Left ventricle myocardium inferior (tissue), 1 donor: ENCODE measurements at regions of chr1 and their contacts with region 1.

Region 1: DNA sequence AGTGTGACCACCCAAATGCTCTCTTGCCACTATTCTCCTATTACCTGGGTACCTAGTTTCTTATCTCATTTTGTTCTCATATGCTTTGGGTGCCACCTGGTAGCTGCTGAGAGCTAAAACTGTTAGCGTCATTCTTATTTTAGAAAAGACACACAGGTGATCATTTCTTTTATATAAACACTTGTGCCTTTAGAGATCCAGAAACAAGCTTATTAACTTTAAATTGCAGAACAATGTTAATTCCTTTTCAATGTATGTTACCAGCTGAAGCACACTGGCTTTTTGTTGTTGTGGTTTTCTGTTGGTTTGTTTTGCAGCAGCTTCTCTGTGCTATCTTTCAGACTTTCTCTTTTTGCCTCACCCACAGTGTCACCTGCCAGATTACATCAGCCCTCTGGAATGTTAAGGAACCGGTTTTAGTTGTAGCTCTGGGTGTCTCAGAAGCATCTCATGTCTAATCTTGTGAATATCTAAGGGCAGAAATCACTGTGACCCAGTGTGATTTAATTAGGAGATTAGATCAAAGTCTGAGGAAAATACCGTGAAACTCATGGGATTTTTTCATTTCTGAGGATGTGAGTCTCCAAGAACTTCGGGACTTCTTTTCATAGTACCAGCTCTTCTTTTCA is 43.4 kb upstream of the SLC19A2 start:
- DNase-seq: no peak
- H3K4me3 ChIP-seq: no peak overlapping the region
- H3K27ac ChIP-seq: no peak overlapping the region
- H3K4me1 ChIP-seq: peaks cover 5% of the 10 kb centered on the region
- H3K27me3 ChIP-seq: no peaks in the 10 kb centered on the region
- CTCF ChIP-seq: no peak

Region 2: GRCh38 chr1:169236143-169236542 is 293.0 kb before region 1 on chr1:
- intact Hi-C with region 1: no loop called
- DNase-seq: no peak
- H3K4me3 ChIP-seq: no peak overlapping the region
- H3K27ac ChIP-seq: no peak overlapping the region
- H3K4me1 ChIP-seq: peaks cover 30% of the 10 kb centered on the region
- H3K27me3 ChIP-seq: no peaks in the 10 kb centered on the region
- CTCF ChIP-seq: peak; percentile 24

Region 3: GRCh38 chr1:169473352-169473751 is 55.8 kb before region 1 on chr1:
- intact Hi-C with region 1: loop called (anchors 10 kb)
- DNase-seq: no peak
- H3K4me3 ChIP-seq: no peak overlapping the region
- H3K27ac ChIP-seq: no peak overlapping the region
- H3K4me1 ChIP-seq: peaks cover 25% of the 10 kb centered on the region
- H3K27me3 ChIP-seq: no peaks in the 10 kb centered on the region
- CTCF ChIP-seq: no peak

Region 4: GRCh38 chr1:169610108-169610507 is 80.9 kb after region 1 on chr1:
- intact Hi-C with region 1: no loop called
- DNase-seq: no peak
- H3K4me3 ChIP-seq: no peak overlapping the region
- H3K27ac ChIP-seq: peak overlapping the region; percentile 42
- H3K4me1 ChIP-seq: peaks cover 16% of the 10 kb centered on the region
- H3K27me3 ChIP-seq: peaks cover 6% of the 10 kb centered on the region
- CTCF ChIP-seq: no peak